ENCODE measurements at regions of chr1 and their contacts with region 1.

Region 1: DNA sequence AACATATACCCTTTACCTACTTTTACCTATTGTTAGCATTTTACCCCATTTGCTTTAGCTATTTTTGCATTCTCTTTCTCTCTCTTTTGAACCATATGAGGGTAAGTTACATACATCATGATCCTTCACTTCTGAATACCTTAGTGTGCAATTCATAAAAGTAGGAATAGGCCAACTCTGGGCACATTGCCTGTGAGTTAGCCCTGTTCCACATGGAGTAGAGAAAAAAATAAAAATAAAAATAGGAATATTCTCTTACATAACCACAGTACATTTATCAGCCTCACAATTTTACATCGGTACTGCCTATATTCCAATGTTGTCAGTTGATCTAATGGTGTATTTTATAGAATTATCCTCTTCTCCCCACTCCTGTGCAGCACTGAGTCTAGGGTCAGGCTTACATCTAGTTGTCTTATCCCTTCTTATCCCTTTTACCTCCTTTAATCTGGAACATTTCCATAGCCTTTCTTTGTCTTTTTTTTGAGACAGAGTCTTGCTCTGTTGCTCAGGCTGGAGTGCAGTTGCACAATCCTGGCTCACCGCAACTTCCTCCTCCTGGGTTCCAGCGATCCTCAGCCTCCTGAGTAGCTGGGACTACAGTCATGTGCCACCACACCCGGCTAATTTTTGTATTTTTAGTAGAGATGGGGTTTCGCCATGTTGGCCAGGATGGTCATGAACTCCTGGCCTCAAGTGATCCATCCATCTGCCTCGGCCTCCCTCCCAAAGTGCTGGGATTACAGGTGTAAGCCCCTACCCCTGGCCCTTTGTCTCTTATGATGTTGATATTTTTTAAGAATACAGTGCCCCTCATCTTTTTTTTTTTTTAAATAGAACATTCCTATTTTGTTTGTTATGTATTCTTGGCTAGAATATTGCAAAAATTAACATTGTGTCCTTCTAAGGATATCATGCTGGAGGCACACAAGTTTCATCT is 11.1 kb upstream of the SLC30A1 start:
- DNase-seq: peak; percentile 89 to 94 (median 91)
- H3K4me3 ChIP-seq: peak overlapping the region in 1 of 3 experiments; percentile 42
- H3K4me3 Mint-ChIP-seq: peak overlapping the region in 1 of 2 donors; percentile 80
- H3K27ac ChIP-seq: peak overlapping the region; percentile 46 to 71
- H3K27ac Mint-ChIP-seq: peak overlapping the region; percentile 78 to 95 (median 94)
- H3K4me1 ChIP-seq: peaks cover 46 to 54% of the 10 kb centered on the region in 2 donors
- H3K4me1 Mint-ChIP-seq: peaks cover 55% of the 10 kb centered on the region
- H3K27me3 ChIP-seq: no peaks in the 10 kb centered on the region
- H3K27me3 Mint-ChIP-seq: peaks cover 0 to 2% (median 0%) of the 10 kb centered on the region in 3 donors
- CTCF ChIP-seq: no peak

Region 2: DNA sequence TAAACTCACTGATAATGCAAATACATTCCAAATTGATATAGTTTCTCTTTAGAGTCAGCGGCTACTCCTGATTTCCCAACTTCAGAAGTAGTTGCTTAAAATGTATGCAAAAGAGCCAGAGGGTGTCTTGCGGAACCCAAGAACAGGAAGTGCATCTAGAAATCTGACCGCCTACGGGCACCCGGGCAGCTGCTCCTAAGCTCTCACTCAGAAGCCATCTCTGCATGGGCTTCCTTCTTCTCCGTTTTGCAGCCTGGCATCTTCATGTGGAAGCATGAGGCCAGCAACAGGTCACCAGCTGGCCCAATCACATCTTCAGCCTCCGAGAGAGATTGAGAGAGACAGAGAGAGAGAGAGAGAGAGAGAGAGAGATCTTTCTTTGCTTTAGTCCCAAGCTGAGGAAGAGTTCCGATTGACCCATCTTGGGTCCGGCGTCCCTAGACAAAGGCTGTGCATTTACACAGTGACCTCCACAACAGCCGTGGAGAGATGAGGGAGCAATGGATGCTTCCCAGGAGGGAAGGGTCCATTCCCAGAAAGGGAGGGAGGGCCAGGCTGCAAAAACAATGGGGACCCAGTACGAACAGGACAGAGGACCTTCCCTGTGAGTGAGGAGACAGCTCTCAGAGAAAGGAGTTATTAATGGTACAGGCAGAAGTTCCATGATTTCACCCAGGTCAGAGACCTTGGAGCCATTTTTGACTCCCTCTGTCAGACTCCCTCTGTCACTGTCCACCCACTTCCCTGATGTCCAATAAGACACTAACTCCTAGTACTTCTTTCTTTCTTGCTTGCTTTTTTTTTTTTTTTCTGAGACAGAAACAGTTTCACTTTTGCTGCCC is 17.1 kb after region 1 on chr1:
- intact Hi-C with region 1: loop called in 1 of 2 experiments (anchors 2 kb)
- DNase-seq: peak; percentile 93 to 96 (median 94)
- H3K4me3 ChIP-seq: peak overlapping the region; percentile 56 to 88 (median 79)
- H3K4me3 Mint-ChIP-seq: peak overlapping the region; percentile 89 to 94
- H3K27ac ChIP-seq: peak overlapping the region; percentile 94 to 97
- H3K27ac Mint-ChIP-seq: peak overlapping the region; percentile 99 to 100 (median 99)
- H3K4me1 ChIP-seq: peaks cover 73 to 81% of the 10 kb centered on the region in 2 donors
- H3K4me1 Mint-ChIP-seq: peaks cover 88% of the 10 kb centered on the region
- H3K27me3 ChIP-seq: no peaks in the 10 kb centered on the region
- H3K27me3 Mint-ChIP-seq: peaks cover 0 to 5% (median 0%) of the 10 kb centered on the region in 3 donors
- CTCF ChIP-seq: no peak

Measured in CD14-positive monocyte (primary cell).